PC-9 (cell line): ENCODE measurements at regions of chr13 and their contacts with region 1.

Region 1: GRCh38 chr13:79767126-79767525 is 286.2 kb downstream of the NDFIP2 start:
- DNase-seq: peak; percentile 24 to 98
- H3K4me3 ChIP-seq: no peak overlapping the region
- H3K27ac ChIP-seq: no peak overlapping the region
- H3K4me1 ChIP-seq: peaks cover 18% of the 10 kb centered on the region
- H3K27me3 ChIP-seq: no peaks in the 10 kb centered on the region
- CTCF ChIP-seq: no peak

Region 2: GRCh38 chr13:79621449-79621848 is 145.7 kb before region 1 on chr13:
- CTCF ChIA-PET with region 1: no interaction called
- POLR2A ChIA-PET with region 1: no interaction called
- intact Hi-C with region 1: loop called (anchors 1 kb)
- DNase-seq: peak; percentile 0 to 62
- H3K4me3 ChIP-seq: no peak overlapping the region
- H3K27ac ChIP-seq: peak overlapping the region; percentile 96
- H3K4me1 ChIP-seq: peaks cover 26% of the 10 kb centered on the region
- H3K27me3 ChIP-seq: no peaks in the 10 kb centered on the region
- CTCF ChIP-seq: no peak

Region 3: GRCh38 chr13:79679334-79679733 is 87.8 kb before region 1 on chr13:
- CTCF ChIA-PET with region 1: no interaction called
- POLR2A ChIA-PET with region 1: no interaction called
- intact Hi-C with region 1: loop called (anchors 1 kb)
- DNase-seq: peak; percentile 38 to 45
- H3K4me3 ChIP-seq: no peak overlapping the region
- H3K27ac ChIP-seq: no peak overlapping the region
- H3K4me1 ChIP-seq: peaks cover 16% of the 10 kb centered on the region
- H3K27me3 ChIP-seq: no peaks in the 10 kb centered on the region
- CTCF ChIP-seq: peak; percentile 88

Region 4: GRCh38 chr13:79736348-79736747 is 30.8 kb before region 1 on chr13:
- CTCF ChIA-PET with region 1: interaction called, 3 read pairs
- POLR2A ChIA-PET with region 1: interaction called, 8 read pairs
- intact Hi-C with region 1: loop called (anchors 1 kb)
- DNase-seq: peak; percentile 70 to 81
- H3K4me3 ChIP-seq: no peak overlapping the region
- H3K27ac ChIP-seq: peak overlapping the region; percentile 66
- H3K4me1 ChIP-seq: peaks cover 18% of the 10 kb centered on the region
- H3K27me3 ChIP-seq: no peaks in the 10 kb centered on the region
- CTCF ChIP-seq: no peak

Region 5: GRCh38 chr13:79749984-79750551 is 17.1 kb before region 1 on chr13:
- CTCF ChIA-PET with region 1: no interaction called
- POLR2A ChIA-PET with region 1: no interaction called
- intact Hi-C with region 1: loop called (anchors 1 kb)
- DNase-seq: peak; percentile 54 to 58
- H3K4me3 ChIP-seq: no peak overlapping the region
- H3K27ac ChIP-seq: no peak overlapping the region
- H3K4me1 ChIP-seq: peaks cover 7% of the 10 kb centered on the region; the same call in 1 of the 2 replicates
- H3K27me3 ChIP-seq: no peaks in the 10 kb centered on the region
- CTCF ChIP-seq: no peak